Vagina (tissue), 2 donors: ENCODE measurements at regions of chr21 and their contacts with region 1.

Region 1: GRCh38 chr21:42818328-42818749 is 61.0 kb downstream of the WDR4 start:
- DNase-seq: peak in 1 of 2 donors; percentile 79
- H3K4me3 ChIP-seq: no peak overlapping the region
- H3K27ac ChIP-seq: no peak overlapping the region
- H3K4me1 ChIP-seq: no peaks in the 10 kb centered on the region
- H3K27me3 ChIP-seq: no peaks in the 10 kb centered on the region
- CTCF ChIP-seq: peak; percentile 51 to 82 (median 73)
- POLR2A ChIP-seq: no peak

Region 2: GRCh38 chr21:42449296-42449927 is 368.9 kb before region 1 on chr21:
- intact Hi-C with region 1: no loop called
- DNase-seq: no peak
- H3K4me3 ChIP-seq: no peak overlapping the region
- H3K27ac ChIP-seq: no peak overlapping the region
- H3K4me1 ChIP-seq: no peaks in the 10 kb centered on the region
- H3K27me3 ChIP-seq: no peaks in the 10 kb centered on the region
- CTCF ChIP-seq: no peak
- POLR2A ChIP-seq: no peak

Region 3: GRCh38 chr21:42594616-42595282 is 223.6 kb before region 1 on chr21:
- intact Hi-C with region 1: loop called (anchors 2 kb)
- DNase-seq: no peak
- H3K4me3 ChIP-seq: no peak overlapping the region
- H3K27ac ChIP-seq: no peak overlapping the region
- H3K4me1 ChIP-seq: peaks cover 11% of the 10 kb centered on the region
- H3K27me3 ChIP-seq: no peaks in the 10 kb centered on the region
- CTCF ChIP-seq: no peak
- POLR2A ChIP-seq: no peak

Region 4: DNA sequence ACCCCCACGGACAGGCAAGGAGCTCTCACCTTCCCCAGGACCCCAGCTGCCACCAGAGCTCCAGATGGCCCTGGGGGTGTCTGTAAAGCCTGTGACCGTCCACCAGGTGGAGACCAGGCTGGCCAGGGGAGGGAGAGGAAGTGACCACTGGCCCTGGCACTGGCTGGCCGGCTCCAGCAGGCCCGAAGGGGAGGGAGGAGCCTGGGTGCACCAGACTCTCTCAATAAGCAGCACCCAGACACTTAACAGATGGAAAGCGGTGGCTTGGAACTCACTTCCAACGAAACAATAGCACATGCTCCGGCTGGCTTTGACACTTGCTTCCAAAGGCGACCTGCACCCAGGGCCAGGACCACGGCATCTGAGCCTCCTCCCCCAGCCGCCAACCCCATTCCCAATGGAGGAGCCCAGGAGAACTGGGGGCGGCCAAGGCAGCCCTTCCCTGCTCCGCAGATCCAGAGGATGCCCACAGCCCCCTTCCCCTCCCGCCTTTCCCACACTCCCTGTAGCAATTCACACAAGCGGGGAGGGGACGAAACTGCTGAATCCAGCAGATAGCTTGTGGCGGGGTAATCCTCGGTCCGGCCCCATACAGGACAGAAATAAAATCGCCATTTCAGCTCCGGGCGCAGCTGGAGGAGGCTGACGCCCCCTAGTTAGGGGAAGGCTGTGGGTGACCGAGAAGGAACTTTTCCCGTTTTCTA is 165.7 kb before region 1 on chr21:
- intact Hi-C with region 1: loop called (anchors 5 kb)
- DNase-seq: no peak
- H3K4me3 ChIP-seq: peak overlapping the region; percentile 68 to 93
- H3K27ac ChIP-seq: peak overlapping the region; percentile 57
- H3K4me1 ChIP-seq: peaks cover 30% of the 10 kb centered on the region
- H3K27me3 ChIP-seq: no peaks in the 10 kb centered on the region
- CTCF ChIP-seq: peak in 1 of 3 experiments; percentile 45
- POLR2A ChIP-seq: no peak